Left cardiac atrium (tissue), 4 donors: ENCODE measurements at regions of chr9 and their contacts with region 1.

Region 1: DNA sequence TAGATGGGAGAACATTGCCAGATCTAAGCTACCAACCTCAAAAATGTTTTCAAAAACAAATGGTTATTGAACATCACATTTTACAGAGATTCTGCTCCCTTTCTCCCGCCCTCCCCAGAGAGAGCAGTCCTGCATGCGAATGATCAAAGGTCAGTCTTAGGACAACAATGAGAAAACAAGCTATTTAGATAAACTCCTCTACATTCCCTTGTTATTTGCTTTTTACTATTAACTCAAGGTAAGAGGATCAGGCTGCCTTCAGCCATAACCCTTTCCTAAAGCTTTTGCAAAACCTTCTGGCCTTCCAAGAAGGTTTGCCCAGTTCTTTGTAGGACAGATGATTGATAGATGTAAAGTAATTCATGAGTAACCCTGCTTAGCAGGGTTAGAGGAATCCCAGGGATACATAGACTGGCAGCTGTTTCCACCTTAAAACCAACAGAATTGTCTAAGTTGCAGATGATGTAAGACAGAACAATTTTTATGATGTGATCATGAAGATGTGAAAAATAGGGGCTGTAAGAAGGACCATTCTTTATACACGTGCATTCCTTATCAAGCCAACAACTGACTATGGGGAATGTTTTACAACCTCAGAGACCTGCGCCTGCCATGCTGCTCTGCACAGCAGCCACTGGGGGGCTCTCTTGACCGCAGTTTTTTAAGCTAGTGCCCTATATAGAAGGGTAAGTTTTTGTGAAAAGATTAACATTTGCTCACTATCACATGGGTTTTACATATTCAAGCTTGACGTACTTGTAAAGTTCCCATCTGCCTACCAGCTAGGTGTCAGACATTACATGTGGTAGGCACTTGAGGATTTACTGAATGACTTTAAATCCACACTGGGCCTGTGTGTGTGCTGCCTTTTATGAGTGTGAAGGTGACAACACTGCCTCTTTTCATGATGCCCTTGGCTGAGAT is 2.3 kb upstream of the ZNF782 start:
- DNase-seq: peak; percentile 49
- ATAC-seq: peak; percentile 42 to 52

Region 2: DNA sequence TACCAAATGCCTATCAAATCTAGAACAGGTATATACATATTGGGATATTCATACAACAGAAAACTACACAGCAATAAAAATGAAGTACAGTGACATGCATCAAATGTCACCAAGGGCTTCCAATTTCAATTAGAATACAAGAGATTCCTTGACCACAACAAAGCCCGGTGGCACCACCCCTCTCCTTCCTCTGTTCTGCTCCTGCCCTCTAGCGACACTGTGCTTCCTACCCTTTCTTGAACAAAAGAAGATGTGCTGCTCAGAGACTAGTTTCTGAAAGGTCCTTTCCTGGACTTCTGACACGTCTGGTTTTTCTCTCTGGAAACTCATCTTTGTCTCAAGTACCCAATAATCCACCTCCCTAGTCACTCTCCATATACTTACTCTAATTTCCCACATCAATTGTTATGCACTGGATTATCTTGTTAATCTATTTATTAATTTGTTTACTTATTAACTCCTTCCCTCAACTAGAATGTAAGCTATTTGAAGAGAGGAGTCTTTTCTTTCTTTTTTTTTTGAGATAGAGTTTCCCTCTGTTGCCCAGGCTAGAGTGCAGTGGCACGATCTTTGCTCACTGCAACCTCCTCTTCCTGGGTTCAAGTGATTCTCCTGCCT is 252.7 kb after region 1 on chr9:
- intact Hi-C with region 1: loop called (anchors 1 to 5 kb)
- DNase-seq: peak; percentile 34
- ATAC-seq: peak in 1 of 2 donors; percentile 60

Region 3: GRCh38 chr9:97398999-97399758 is 542.6 kb after region 1 on chr9:
- intact Hi-C with region 1: loop called (anchors 1 to 5 kb)
- DNase-seq: peak; percentile 71
- ATAC-seq: peak; percentile 84 to 93